CD8-positive, alpha-beta T cell (primary cell): ENCODE measurements at regions of chr1 and their contacts with region 1.

Region 1: GRCh38 chr1:77313491-77313890 is 31.7 kb downstream of the AK5 start:
- DNase-seq: peak in 6 of 9 experiments; percentile 25 to 66 (median 34)
- ATAC-seq: peak; percentile 51
- H3K4me3 ChIP-seq: no peak overlapping the region
- H3K4me3 Mint-ChIP-seq: no peak overlapping the region
- H3K27ac ChIP-seq: no peak overlapping the region
- H3K27ac Mint-ChIP-seq: peak overlapping the region; percentile 11
- H3K4me1 ChIP-seq: peaks cover 34% of the 10 kb centered on the region
- H3K4me1 Mint-ChIP-seq: peaks cover 34% of the 10 kb centered on the region
- H3K27me3 ChIP-seq: no peaks in the 10 kb centered on the region
- H3K27me3 Mint-ChIP-seq: no peaks in the 10 kb centered on the region
- CTCF ChIP-seq: no peak

Region 2: GRCh38 chr1:77333501-77333900 is 20.0 kb after region 1 on chr1:
- CTCF ChIA-PET with region 1: interaction called, 3 read pairs
- POLR2A ChIA-PET with region 1: no interaction called
- intact Hi-C with region 1: loop called in 1 of 2 experiments (anchors 2 kb)
- DNase-seq: no peak
- ATAC-seq: no peak
- H3K4me3 ChIP-seq: no peak overlapping the region
- H3K4me3 Mint-ChIP-seq: no peak overlapping the region
- H3K27ac ChIP-seq: no peak overlapping the region
- H3K27ac Mint-ChIP-seq: no peak overlapping the region
- H3K4me1 ChIP-seq: peaks cover 13% of the 10 kb centered on the region
- H3K4me1 Mint-ChIP-seq: peaks cover 12% of the 10 kb centered on the region
- H3K27me3 ChIP-seq: no peaks in the 10 kb centered on the region
- H3K27me3 Mint-ChIP-seq: no peaks in the 10 kb centered on the region
- CTCF ChIP-seq: no peak

Region 3: GRCh38 chr1:77533660-77534305 is 220.3 kb after region 1 on chr1:
- CTCF ChIA-PET with region 1: no interaction called
- POLR2A ChIA-PET with region 1: interaction called, 3 read pairs
- intact Hi-C with region 1: loop called in 1 of 2 experiments (anchors 5 kb)
- DNase-seq: peak; percentile 26 to 77 (median 61)
- ATAC-seq: peak; percentile 62
- H3K4me3 ChIP-seq: no peak overlapping the region
- H3K4me3 Mint-ChIP-seq: peak overlapping the region; percentile 38
- H3K27ac ChIP-seq: no peak overlapping the region
- H3K27ac Mint-ChIP-seq: peak overlapping the region; percentile 21
- H3K4me1 ChIP-seq: peaks cover 9% of the 10 kb centered on the region
- H3K4me1 Mint-ChIP-seq: peaks cover 7% of the 10 kb centered on the region
- H3K27me3 ChIP-seq: no peaks in the 10 kb centered on the region
- H3K27me3 Mint-ChIP-seq: no peaks in the 10 kb centered on the region
- CTCF ChIP-seq: peak; percentile 91

Region 4: GRCh38 chr1:77796695-77797416 is 483.4 kb after region 1 on chr1:
- CTCF ChIA-PET with region 1: no interaction called
- POLR2A ChIA-PET with region 1: no interaction called
- intact Hi-C with region 1: no loop called
- DNase-seq: no peak
- ATAC-seq: no peak
- H3K4me3 ChIP-seq: no peak overlapping the region
- H3K4me3 Mint-ChIP-seq: no peak overlapping the region
- H3K27ac ChIP-seq: no peak overlapping the region
- H3K27ac Mint-ChIP-seq: no peak overlapping the region
- H3K4me1 ChIP-seq: no peaks in the 10 kb centered on the region
- H3K4me1 Mint-ChIP-seq: peaks cover 42% of the 10 kb centered on the region
- H3K27me3 ChIP-seq: no peaks in the 10 kb centered on the region
- H3K27me3 Mint-ChIP-seq: no peaks in the 10 kb centered on the region
- CTCF ChIP-seq: no peak